ENCODE measurements at regions of chr2 and their contacts with region 1.

Region 1: GRCh38 chr2:26483957-26484565 is 6.1 kb upstream of the OTOF start:
- DNase-seq: no peak

Region 2: GRCh38 chr2:26530696-26531095 is 46.6 kb after region 1 on chr2:
- intact Hi-C with region 1: no loop called
- DNase-seq: no peak

Region 3: GRCh38 chr2:28338046-28338817 is 1854.2 kb after region 1 on chr2:
- intact Hi-C with region 1: loop called in 1 of 2 experiments (anchors 10 kb)
- DNase-seq: peak; percentile 94

Measured in posterior vena cava (tissue), 2 donors.